PC-9 (cell line): ENCODE measurements at regions of chr3 and their contacts with region 1.

Region 1: GRCh38 chr3:125916376-125916978 is 52.5 kb upstream of the ROPN1B start:
- DNase-seq: peak; percentile 88 to 99
- H3K4me3 ChIP-seq: peak overlapping the region; percentile 85
- H3K27ac ChIP-seq: peak overlapping the region; percentile 65
- H3K4me1 ChIP-seq: peaks cover 41% of the 10 kb centered on the region
- H3K27me3 ChIP-seq: no peaks in the 10 kb centered on the region
- CTCF ChIP-seq: no peak; the same call in 1 of the 2 replicates

Region 2: GRCh38 chr3:125767641-125768040 is 148.8 kb before region 1 on chr3:
- CTCF ChIA-PET with region 1: no interaction called
- POLR2A ChIA-PET with region 1: no interaction called
- intact Hi-C with region 1: loop called (anchors 5 kb)
- DNase-seq: no peak
- H3K4me3 ChIP-seq: no peak overlapping the region
- H3K27ac ChIP-seq: no peak overlapping the region
- H3K4me1 ChIP-seq: no peaks in the 10 kb centered on the region
- H3K27me3 ChIP-seq: peaks cover 13% of the 10 kb centered on the region
- CTCF ChIP-seq: no peak

Region 3: DNA sequence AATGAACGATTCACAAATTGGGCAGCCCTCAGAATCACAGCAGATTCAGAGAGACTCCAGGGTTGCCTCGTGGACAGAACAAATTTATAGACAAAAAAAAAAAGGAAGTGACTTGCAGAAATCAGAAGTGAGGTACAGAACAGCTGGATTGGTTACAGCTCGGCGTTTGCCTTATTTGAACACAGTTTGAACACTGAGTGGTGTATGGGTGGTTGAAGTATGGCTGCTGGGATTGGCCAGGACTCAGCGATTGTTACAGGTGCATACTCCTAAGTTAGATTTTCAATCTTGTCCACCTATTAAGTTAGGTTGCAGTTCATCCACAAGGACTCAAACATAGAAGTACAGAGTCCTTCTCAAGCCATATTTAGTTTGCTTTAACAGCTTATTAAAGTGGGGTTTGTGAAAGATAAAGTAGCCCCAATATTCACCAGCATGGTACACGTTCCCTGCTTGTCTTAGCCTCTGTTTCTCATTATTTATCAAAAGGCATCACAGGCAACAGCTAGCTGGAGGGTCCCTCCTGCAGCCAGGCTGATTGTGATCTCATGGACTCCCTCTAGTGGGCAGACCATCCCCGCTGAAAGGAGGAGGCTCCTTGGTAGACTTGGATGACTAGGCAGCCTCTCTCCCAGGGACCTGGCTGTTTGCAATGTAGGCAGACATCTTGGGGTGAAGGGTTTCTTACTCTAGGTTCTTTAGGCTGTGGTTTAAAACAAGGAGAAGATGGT is 281.5 kb after region 1 on chr3:
- CTCF ChIA-PET with region 1: no interaction called
- POLR2A ChIA-PET with region 1: no interaction called
- intact Hi-C with region 1: loop called (anchors 5 kb)
- DNase-seq: peak; percentile 87 to 90
- H3K4me3 ChIP-seq: peak overlapping the region; percentile 59
- H3K27ac ChIP-seq: peak overlapping the region; percentile 83
- H3K4me1 ChIP-seq: 0 out of 2 replicates have a peak, but pooled peaks cover 5% of the 10 kb centered on the region
- H3K27me3 ChIP-seq: no peaks in the 10 kb centered on the region
- CTCF ChIP-seq: peak; percentile 81

Region 4: DNA sequence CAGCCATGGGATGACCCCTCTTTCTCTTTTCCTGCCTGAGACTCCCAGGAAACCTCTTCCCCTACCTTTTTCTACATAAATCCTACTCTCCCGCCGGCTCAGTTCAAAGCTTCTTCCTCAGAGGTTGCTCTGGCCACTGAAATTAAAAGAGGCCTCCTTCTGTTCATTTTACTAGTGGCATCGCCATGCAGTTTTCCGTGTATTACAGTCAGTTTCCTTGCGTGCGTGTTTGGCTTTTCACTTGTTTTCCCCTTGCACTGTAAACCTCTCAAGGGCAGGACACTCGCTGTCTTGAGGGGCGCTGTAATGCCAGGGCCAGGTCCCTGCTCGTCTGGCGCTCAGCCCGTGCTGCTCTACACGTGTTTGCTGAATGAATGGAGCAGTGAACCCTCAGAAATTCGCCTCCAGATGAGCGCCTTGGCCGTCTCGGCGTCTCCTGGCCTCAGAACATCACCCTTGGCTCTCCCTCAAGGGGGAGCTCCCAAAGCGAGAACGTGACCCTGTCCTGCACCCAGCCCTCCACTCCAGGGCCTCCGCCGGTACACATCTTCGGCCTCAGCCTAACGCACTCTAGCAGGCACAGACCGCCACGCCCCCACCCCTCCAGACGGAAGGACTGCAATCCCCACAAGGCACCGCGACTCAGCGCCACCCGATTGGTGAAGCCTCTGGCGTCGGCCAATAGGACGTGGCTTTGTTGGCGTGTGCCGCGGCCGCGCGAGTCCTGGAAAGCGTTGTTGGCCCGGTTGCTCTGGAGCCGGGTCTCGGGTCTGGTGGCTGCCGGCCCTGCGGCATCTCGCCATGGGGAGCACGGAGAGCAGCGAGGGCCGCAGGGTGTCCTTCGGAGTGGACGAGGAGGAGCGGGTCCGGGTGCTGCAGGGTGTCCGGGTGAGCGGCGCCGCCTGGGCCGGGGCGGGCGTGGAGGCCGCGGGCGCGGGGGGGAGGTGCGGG is 787.3 kb after region 1 on chr3 and contains the start of gene CHCHD6:
- CTCF ChIA-PET with region 1: no interaction called
- POLR2A ChIA-PET with region 1: no interaction called
- intact Hi-C with region 1: loop called (anchors 5 kb)
- DNase-seq: peak; percentile 93 to 99
- H3K4me3 ChIP-seq: peak within 1 kb of the TSS; percentile 69
- H3K27ac ChIP-seq: no peak within 1 kb of the TSS
- H3K4me1 ChIP-seq: peaks cover 20% of the 10 kb centered on the region
- H3K27me3 ChIP-seq: no peaks in the 10 kb centered on the region
- CTCF ChIP-seq: peak; percentile 51; the same call in 1 of the 2 replicates
- total RNA-seq, gene CHCHD6: 47.7 and 48.2 TPM in 2 replicates

Region 5: DNA sequence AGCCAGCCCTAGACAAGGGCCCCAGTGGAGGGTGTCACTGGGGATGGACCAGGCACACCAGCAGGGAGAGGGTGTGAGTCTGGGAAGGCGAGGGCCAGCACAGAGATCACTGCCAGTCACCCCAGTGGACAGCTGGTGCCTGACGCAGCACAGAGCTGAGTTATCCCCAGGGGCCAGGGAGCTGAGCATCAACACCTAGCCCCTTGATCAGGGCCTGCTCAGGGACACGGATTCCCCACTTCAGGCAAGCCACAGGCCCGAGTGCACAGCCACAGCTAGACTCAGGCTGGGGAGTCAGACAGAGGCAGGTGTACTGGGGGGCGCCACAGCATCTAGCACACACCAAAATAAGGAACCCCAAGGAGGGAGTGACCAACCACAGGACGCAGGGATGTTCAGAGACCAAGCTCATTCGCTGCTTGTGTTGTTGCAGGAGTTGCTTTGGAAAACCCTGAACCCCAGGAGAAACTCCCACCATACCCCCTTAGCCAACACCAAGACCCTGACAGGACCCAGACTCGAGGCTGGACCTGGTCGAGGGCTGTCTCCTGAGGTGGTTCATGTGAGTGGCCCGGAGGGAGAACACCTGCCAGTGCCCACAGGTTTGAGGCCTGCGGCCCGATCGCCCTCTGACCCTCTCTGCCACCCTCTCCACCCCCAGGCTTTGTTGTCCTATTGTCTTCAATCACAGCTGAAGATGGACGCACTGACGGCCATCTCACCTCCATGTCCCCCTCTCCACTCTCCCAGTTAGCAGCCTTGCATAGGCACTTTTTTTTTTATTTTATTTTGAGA is 1527.3 kb after region 1 on chr3:
- CTCF ChIA-PET with region 1: no interaction called
- POLR2A ChIA-PET with region 1: no interaction called
- intact Hi-C with region 1: no loop called
- DNase-seq: no peak
- H3K4me3 ChIP-seq: no peak overlapping the region
- H3K27ac ChIP-seq: no peak overlapping the region
- H3K4me1 ChIP-seq: no peaks in the 10 kb centered on the region
- H3K27me3 ChIP-seq: peaks cover 32% of the 10 kb centered on the region; the same call in 1 of the 2 replicates
- CTCF ChIP-seq: no peak